ENCODE measurements at regions of chr12 and their contacts with region 1.

Region 1: GRCh38 chr12:10153271-10154144 is 18.4 kb downstream of the OLR1 start:
- DNase-seq: peak; percentile 61 to 82
- H3K4me3 ChIP-seq: peak overlapping the region; percentile 50 to 70 (median 66)
- H3K27ac ChIP-seq: peak overlapping the region; percentile 51; the same call in 1 of the 2 replicates
- H3K4me1 ChIP-seq: peaks cover 0 to 4% (median 1%) of the 10 kb centered on the region in 4 experiments; a peak in 2 of 7 replicates
- H3K27me3 ChIP-seq: no peaks in the 10 kb centered on the region
- CTCF ChIP-seq: peak; percentile 15 to 67 (median 56)
- EP300 ChIP-seq: no peak
- POLR2A ChIP-seq: peak; percentile 32 to 39; a peak in 2 of 3 replicates
- RAD21 ChIP-seq: peak; percentile 54 to 66

Region 2: DNA sequence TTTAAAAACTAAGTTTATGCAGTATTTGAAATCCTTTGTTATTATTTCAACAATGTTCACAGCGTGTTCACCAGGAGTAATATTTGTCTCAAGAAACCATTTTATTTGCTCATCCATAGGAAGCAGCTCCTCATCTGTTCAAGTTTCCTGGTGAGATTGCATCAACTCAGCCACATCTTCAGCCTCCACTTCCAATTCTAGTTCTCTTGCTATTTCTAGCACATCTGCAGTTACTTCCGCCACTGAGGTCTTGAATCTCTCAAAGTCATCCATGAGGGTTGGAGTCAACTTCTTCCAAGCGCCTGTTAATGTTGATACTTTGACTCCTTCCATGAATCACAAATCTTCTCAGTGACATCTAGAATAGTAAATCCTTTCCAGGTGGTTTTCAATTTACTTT is 105.0 kb before region 1 on chr12:
- CTCF ChIA-PET with region 1: no interaction called
- POLR2A ChIA-PET with region 1: no interaction called
- DNase-seq: no peak
- H3K4me3 ChIP-seq: no peak overlapping the region
- H3K27ac ChIP-seq: no peak overlapping the region
- H3K4me1 ChIP-seq: no peaks in the 10 kb centered on the region
- H3K27me3 ChIP-seq: no peaks in the 10 kb centered on the region
- CTCF ChIP-seq: no peak
- EP300 ChIP-seq: no peak
- POLR2A ChIP-seq: no peak
- RAD21 ChIP-seq: no peak

Region 3: GRCh38 chr12:10088955-10089900 is 64.3 kb before region 1 on chr12:
- CTCF ChIA-PET with region 1: no interaction called
- POLR2A ChIA-PET with region 1: no interaction called
- DNase-seq: no peak
- H3K4me3 ChIP-seq: no peak overlapping the region
- H3K27ac ChIP-seq: no peak overlapping the region
- H3K4me1 ChIP-seq: peaks cover 0 to 3% (median 3%) of the 10 kb centered on the region in 4 experiments; a peak in 5 of 7 replicates
- H3K27me3 ChIP-seq: no peaks in the 10 kb centered on the region
- CTCF ChIP-seq: no peak
- EP300 ChIP-seq: no peak
- POLR2A ChIP-seq: no peak
- RAD21 ChIP-seq: no peak

Region 4: DNA sequence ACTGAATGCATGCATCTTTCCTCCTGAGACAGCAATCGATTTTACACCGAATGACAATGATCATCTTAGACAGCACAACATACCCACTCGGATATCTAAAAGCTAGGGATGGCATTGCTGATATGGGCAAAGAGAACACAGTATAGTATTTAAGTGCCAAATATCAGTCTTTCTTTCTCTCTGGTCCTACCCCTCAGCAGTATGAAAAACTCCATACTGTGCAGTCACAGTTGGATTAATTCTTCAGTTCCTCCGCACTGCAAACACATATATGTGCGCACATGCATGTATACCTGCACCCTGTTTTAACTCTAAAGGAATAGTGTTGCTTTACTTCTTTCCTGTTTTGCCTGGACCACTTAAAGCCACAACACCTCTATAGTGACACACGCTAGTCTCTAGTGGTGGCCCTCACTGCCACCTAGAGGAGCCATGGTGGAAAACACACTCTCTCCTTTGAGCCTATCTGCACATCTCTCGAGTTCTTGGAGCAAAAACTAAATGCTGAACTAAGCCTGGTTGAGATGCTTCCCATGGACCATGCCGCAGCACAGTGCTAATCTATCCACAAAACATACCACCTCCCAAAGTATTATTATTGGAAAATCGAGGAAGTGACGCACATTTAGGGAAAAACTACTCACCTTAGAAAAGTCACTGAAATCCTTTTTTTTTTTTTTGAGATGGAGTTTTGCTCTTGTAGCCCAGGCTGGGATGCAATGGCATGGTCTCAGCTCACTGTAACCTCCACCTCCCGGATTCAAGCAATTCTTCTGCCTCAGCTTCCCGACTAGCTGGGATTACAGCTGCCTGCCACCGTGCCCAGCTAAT is 37.3 kb after region 1 on chr12:
- CTCF ChIA-PET with region 1: interaction called, 36 read pairs
- POLR2A ChIA-PET with region 1: interaction called, 6 read pairs
- DNase-seq: peak in 1 of 2 experiments; percentile 53
- H3K4me3 ChIP-seq: no peak overlapping the region
- H3K27ac ChIP-seq: no peak overlapping the region
- H3K4me1 ChIP-seq: 0 out of 7 replicates have a peak, but pooled peaks cover 0 to 2% (median 0%) of the 10 kb centered on the region in 4 experiments
- H3K27me3 ChIP-seq: no peaks in the 10 kb centered on the region
- CTCF ChIP-seq: peak; percentile 50 to 83 (median 74)
- EP300 ChIP-seq: no peak
- POLR2A ChIP-seq: no peak
- RAD21 ChIP-seq: peak; percentile 77 to 80

Region 5: DNA sequence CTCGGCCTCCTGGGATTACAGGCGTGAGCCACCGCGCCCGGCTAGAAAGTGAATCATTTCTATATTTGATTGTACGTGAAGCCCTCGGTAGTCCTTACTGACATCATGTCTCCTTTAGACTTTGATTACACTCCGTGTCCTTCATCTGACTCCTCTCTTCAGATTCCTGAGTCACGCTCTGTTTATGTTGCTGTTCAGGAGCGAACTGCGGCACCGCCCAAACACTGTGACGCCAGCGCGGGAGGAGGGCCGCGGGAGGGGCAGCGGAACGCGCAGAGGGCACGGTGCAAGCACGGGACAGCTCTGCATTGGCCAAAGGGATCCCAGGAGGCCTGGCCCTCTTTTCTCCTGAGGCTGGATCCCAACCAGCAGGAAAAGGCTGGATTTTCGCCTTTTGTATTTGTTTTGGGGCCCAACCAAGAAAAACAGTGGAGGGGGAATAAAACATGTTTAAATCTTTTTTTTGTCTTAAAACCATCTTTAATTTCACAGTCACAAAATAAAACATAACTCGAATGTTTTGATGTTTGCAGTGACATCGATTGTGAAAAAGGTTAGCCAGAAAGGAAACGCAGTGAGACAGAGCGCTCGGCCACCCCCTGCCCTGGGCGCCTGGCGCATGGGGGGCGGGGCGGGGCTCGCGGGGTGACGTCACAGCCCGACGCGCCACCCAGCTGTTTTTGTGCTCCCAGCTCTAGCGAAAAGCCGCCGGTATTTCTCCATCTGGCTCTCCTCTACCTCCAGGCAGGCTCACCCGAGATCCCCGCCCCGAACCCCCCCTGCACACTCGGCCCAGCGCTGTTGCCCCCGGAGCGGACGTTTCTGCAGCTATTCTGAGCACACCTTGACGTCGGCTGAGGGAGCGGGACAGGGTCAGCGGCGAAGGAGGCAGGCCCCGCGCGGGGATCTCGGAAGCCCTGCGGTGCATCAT is 59.0 kb after region 1 on chr12 and contains the start of gene GABARAPL1:
- CTCF ChIA-PET with region 1: interaction called, 7 read pairs
- POLR2A ChIA-PET with region 1: interaction called, 14 read pairs
- DNase-seq: peak; percentile 72 to 85
- H3K4me3 ChIP-seq: peak within 1 kb of the TSS; percentile 66 to 97 (median 88)
- H3K27ac ChIP-seq: peak within 1 kb of the TSS; percentile 86
- H3K4me1 ChIP-seq: peaks cover 0 to 10% (median 3%) of the 10 kb centered on the region in 4 experiments; a peak in 5 of 7 replicates
- H3K27me3 ChIP-seq: no peaks in the 10 kb centered on the region
- CTCF ChIP-seq: no peak
- EP300 ChIP-seq: peak in 1 of 2 experiments; percentile 83; a peak in 1 of 3 replicates
- POLR2A ChIP-seq: peak; percentile 53 to 93
- RAD21 ChIP-seq: no peak
- total RNA-seq, gene GABARAPL1: 80.9 and 87.9 TPM in 2 replicates

Measured in H1 (cell line).